ENCODE measurements at regions of chr7 and their contacts with region 1.

Region 1: GRCh38 chr7:24401628-24402593 is 117.9 kb downstream of the NPY start:
- DNase-seq: no peak
- H3K4me3 Mint-ChIP-seq: no peak overlapping the region
- H3K27ac Mint-ChIP-seq: no peak overlapping the region
- H3K4me1 Mint-ChIP-seq: peaks cover 7% of the 10 kb centered on the region
- H3K27me3 Mint-ChIP-seq: peaks cover 11% of the 10 kb centered on the region

Region 2: DNA sequence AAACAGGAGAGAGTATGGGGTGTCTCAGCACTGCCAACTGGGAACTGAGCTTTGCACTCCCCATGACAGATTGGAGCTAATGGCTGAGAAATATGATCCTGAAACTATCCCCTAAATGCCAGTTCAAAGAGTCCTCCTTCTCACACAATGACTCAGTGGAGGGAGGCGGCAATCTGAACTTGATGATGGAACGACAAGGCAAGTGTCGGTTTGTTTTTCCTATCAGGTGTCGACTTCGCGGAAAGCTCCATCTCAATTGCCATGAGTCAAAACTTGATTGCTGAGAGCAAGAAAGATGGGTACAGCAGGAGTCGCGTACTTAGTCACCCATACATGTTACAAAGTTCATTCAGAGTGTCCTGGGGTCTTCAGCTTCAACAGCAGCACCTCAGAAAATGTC is 65.5 kb before region 1 on chr7:
- intact Hi-C with region 1: no loop called
- DNase-seq: no peak
- H3K4me3 Mint-ChIP-seq: no peak overlapping the region
- H3K27ac Mint-ChIP-seq: no peak overlapping the region
- H3K4me1 Mint-ChIP-seq: peaks cover 5% of the 10 kb centered on the region
- H3K27me3 Mint-ChIP-seq: peaks cover 17% of the 10 kb centered on the region

Region 3: GRCh38 chr7:24587848-24588247 is 185.9 kb after region 1 on chr7:
- intact Hi-C with region 1: loop called (anchors 1 kb)
- DNase-seq: no peak
- H3K4me3 Mint-ChIP-seq: no peak overlapping the region
- H3K27ac Mint-ChIP-seq: no peak overlapping the region
- H3K4me1 Mint-ChIP-seq: peaks cover 38% of the 10 kb centered on the region
- H3K27me3 Mint-ChIP-seq: peaks cover 2% of the 10 kb centered on the region

Region 4: DNA sequence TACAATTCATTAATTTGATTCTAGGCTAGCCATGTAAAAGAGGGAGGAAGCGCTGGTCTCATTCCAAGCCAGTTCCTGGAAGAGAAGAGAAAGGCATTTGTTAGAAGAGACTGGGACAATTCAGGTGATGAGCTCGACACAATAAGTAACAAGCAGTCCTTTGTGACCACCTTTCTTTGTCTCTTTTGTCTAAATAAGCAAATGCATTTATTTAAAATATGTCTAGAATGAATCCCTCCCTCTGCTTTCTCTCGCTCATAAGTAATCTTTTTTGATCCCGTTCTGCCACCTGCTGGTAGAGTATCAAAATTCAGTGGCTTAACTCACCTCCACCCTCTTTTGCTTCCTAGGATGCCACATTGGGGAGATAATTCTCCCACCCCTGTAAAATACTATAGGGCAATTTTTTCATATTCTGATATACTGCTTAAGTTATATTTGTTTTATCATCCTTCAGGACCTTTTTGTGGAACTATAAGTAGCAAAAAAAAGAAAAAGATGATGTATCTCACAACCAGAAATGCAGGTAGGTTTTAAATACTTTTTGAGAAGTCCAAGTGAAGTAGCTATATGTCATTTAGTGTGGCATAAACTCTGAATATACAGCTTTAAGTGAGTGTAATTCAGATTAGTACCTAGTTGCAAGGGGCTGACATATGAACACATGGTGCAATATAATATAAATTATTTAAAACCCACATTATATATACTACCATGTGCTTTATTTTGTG is 263.8 kb after region 1 on chr7:
- intact Hi-C with region 1: loop called (anchors 1 kb)
- DNase-seq: peak; percentile 12
- H3K4me3 Mint-ChIP-seq: no peak overlapping the region
- H3K27ac Mint-ChIP-seq: no peak overlapping the region
- H3K4me1 Mint-ChIP-seq: peaks cover 9% of the 10 kb centered on the region
- H3K27me3 Mint-ChIP-seq: no peaks in the 10 kb centered on the region

Region 5: DNA sequence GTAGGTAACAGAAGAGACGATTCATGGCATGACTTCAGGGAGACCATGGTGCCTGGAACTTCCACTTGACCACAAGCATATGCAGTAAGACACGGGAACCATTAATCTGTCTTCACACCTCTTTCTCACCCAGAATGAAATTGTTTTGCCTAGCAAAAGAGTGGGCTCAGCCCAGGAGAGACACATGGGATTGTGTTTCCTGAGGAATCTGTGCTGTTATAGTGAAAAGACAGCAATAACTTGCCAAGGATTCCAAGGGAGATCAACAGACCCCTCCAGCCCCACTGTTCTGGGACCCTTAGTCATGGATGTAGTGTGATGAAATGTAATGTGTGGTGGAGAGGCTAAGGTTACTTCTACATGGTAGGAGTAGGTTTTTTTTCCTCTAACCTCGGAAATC is 1018.9 kb after region 1 on chr7:
- intact Hi-C with region 1: no loop called
- DNase-seq: no peak
- H3K4me3 Mint-ChIP-seq: no peak overlapping the region
- H3K27ac Mint-ChIP-seq: no peak overlapping the region
- H3K4me1 Mint-ChIP-seq: no peaks in the 10 kb centered on the region
- H3K27me3 Mint-ChIP-seq: no peaks in the 10 kb centered on the region

Measured in activated T-helper 2 cell treated with anti-CD3 and anti-CD28 coated beads, Interferon-gamma antibody, Interleukin-2, Interleukin-4, amounts not matched to agents 10 μg/mL and 5 μg/mL and 100 μg/mL, durations not matched to agents 14 hours and 24 hours and 36 hours (primary cell).